GM13977 (cell line): ENCODE measurements at regions of chr15 and their contacts with region 1.

Region 1: GRCh38 chr15:78241007-78241406 is 6.6 kb upstream of the ACSBG1 start:
- DNase-seq: peak; percentile 88
- CTCF ChIP-seq: peak; percentile 90

Region 2: DNA sequence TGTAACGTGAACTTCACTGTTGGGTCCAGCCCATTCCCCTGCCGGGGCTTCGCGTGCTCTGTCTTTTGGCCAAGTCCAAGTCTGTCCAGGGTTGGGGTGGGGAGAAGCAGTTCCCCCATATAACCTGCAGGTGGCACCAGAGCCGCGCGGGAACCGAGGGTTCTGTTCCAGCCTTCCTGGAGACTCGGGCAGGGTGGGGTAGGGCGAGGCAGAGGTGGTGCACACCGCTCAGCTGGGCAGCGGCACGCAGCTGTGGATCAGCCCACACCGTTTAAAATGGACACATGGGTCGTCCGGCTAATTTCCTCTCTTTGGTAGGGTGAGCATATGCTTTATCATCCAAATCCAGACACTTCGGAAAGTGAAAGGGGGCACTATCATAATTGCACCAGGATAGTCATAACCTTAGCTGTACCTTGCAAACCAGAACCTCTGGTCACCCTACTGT is 281.6 kb before region 1 on chr15:
- in situ Hi-C with region 1: loop called (anchors 25 kb)
- DNase-seq: peak; percentile 79
- CTCF ChIP-seq: peak; percentile 97

Region 3: DNA sequence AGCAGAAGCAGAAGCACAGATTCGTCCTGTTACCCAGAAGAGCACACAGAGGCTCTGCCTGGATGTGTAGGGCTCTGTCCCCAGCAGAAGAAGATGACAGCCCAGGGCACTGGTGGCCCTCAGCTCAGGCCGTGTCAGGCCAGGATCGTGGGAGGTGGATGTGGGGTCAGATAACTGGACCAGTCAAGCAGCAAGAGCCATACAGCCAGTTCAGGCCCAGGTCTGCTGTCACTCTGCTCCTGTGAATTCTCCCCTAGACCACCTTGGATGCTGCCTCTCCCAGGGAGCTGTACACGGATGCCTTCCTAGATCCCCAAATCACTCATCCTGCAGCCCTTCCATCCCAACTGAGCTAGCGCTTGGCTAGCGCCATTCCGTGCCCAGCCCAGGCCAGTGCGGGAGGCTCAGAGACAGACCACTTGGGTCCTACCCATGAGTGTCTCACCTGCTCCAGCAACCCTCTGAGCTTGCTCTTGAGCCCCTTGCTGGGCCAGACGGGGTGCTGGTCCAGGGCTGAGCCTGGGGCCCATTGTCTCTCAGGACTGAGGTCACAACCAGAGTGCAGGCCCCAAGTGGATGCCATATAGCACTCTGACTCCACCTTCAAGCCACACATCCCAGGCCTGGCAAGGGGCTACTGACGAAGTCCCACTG is 131.0 kb before region 1 on chr15:
- in situ Hi-C with region 1: loop called (anchors 5 kb)
- DNase-seq: no peak
- CTCF ChIP-seq: no peak